WTC11 (cell line): ENCODE measurements at regions of chr5 and their contacts with region 1.

Region 1: DNA sequence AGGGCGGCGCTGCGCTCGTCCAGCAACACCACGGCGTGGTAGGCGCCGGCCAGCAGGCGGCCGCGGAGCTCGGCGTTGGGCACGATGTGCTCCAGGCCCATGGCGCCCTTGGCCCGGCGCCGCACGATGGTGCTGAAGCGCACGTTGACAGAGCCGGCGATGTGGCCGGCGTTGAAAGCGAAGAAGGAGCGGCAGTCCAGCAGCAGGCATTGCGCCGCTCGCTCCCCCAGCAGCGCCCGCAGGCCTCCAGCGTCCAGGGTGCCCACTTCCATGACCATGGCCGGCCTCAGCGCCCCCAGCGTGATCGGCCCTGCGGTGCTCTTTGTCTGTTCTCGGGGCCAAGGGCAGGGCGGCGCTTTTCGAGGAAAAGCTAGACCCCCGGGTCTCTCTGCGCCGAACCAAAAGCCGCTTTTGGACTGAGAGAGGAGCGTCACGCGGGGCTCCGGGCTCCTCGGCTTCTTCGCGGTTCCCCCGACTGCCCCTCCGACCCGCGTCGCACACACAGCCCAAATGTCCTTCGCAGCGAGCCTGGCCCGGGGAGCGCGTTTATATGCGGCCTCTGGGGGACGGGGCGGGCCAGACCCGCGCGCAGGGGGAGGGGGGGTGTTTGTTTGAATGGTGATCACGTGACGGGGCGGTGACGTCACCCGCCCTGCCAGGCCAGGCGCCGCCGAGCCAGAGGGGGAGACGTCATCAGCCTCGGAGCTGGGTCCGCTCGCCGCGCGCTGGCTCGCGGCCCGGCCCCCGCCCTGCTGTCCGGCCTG is at the start of gene DUSP1:
- DNase-seq: peak; percentile 97
- ATAC-seq: peak; percentile 78
- H3K4me3 Mint-ChIP-seq: peak within 1 kb of the TSS; percentile 88
- H3K27ac Mint-ChIP-seq: peak within 1 kb of the TSS; percentile 90
- H3K4me1 Mint-ChIP-seq: peaks cover 24% of the 10 kb centered on the region
- H3K27me3 Mint-ChIP-seq: peaks cover 39% of the 10 kb centered on the region
- CTCF ChIP-seq: no peak
- total RNA-seq, gene DUSP1: 9.5 to 12.4 TPM (median 11.0 TPM) in 3 replicates

Region 2: DNA sequence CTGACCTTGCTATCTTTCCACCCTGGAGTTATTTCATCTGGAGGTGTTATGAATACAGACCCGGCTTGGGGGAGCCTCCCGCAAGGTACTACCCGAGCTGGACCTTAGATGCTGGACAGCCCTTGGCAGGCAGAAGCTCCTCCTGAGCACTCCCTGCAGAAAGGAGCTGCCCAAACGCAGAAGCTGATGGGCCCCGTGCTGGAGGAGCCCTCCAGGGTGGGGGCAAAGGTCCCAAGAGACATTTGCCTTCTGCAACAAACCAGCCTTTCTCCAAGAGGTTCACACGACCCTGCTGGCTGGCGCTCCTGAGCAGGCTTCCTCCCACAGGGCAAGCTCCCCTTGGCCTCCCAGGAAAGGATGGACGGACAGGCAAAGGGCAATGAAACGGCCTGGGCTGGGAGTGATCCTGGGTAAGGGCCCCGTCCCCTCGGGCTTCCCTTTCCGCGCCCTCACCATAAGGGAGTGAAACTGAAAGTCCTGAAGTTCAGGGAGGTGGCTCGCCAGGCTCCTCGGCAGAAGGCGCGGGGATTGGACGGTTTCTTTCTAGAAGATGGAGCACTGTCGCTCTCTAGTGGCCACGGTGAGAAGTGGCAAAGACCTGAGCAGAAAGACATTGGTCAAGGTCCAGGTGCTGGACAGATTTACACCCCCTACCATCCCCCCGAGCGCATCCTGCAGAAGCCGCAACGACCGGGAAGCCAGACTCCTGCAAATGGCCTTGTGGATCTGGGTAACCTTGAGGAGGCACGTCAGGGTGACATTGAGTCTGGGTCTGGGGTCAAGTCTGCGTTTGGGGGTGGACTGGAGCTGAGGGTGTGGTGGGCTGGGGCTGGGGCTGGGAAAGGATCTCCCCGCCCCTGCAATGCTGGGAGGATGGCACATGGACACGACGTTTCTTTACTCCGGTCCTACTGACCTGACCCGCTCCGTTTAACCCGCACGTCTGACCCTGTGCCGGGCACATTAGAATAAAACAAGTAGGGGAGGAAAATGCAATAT is 73.4 kb before region 1 on chr5:
- CTCF ChIA-PET with region 1: interaction called, 10 read pairs
- POLR2A ChIA-PET with region 1: no interaction called
- DNase-seq: peak; percentile 89
- ATAC-seq: peak; percentile 60
- H3K4me3 Mint-ChIP-seq: peak overlapping the region; percentile 66
- H3K27ac Mint-ChIP-seq: no peak overlapping the region
- H3K4me1 Mint-ChIP-seq: peaks cover 47% of the 10 kb centered on the region
- H3K27me3 Mint-ChIP-seq: peaks cover 32% of the 10 kb centered on the region
- CTCF ChIP-seq: peak; percentile 85

Region 3: GRCh38 chr5:172714491-172715421 is 56.1 kb before region 1 on chr5:
- CTCF ChIA-PET with region 1: interaction called, 72 read pairs
- POLR2A ChIA-PET with region 1: interaction called, 11 read pairs
- DNase-seq: peak; percentile 85
- ATAC-seq: peak; percentile 80
- H3K4me3 Mint-ChIP-seq: no peak overlapping the region
- H3K27ac Mint-ChIP-seq: no peak overlapping the region
- H3K4me1 Mint-ChIP-seq: peaks cover 2% of the 10 kb centered on the region; the same call in 1 of the 2 replicates
- H3K27me3 Mint-ChIP-seq: peaks cover 13% of the 10 kb centered on the region
- CTCF ChIP-seq: peak; percentile 87

Region 4: GRCh38 chr5:172758083-172758833 is 12.6 kb before region 1 on chr5:
- CTCF ChIA-PET with region 1: interaction called, 21 read pairs
- POLR2A ChIA-PET with region 1: interaction called, 4 read pairs
- DNase-seq: no peak
- ATAC-seq: peak; percentile 84
- H3K4me3 Mint-ChIP-seq: no peak overlapping the region
- H3K27ac Mint-ChIP-seq: peak overlapping the region; percentile 25; the same call in 1 of the 2 replicates
- H3K4me1 Mint-ChIP-seq: peaks cover 9% of the 10 kb centered on the region
- H3K27me3 Mint-ChIP-seq: peaks cover 36% of the 10 kb centered on the region
- CTCF ChIP-seq: no peak

Region 5: GRCh38 chr5:172788771-172789686 is 18.2 kb after region 1 on chr5:
- CTCF ChIA-PET with region 1: interaction called, 34 read pairs
- POLR2A ChIA-PET with region 1: interaction called, 3 read pairs
- DNase-seq: no peak
- ATAC-seq: peak; percentile 41
- H3K4me3 Mint-ChIP-seq: no peak overlapping the region
- H3K27ac Mint-ChIP-seq: no peak overlapping the region
- H3K4me1 Mint-ChIP-seq: peaks cover 5% of the 10 kb centered on the region; the same call in 1 of the 2 replicates
- H3K27me3 Mint-ChIP-seq: peaks cover 5% of the 10 kb centered on the region; the same call in 1 of the 2 replicates
- CTCF ChIP-seq: no peak

Region 6: GRCh38 chr5:172833686-172834414 is 63.0 kb after region 1 on chr5 and contains the start of gene ERGIC1:
- CTCF ChIA-PET with region 1: interaction called, 20 read pairs
- POLR2A ChIA-PET with region 1: interaction called, 7 read pairs
- DNase-seq: peak; percentile 80
- ATAC-seq: peak; percentile 79
- H3K4me3 Mint-ChIP-seq: peak within 1 kb of the TSS; percentile 85
- H3K27ac Mint-ChIP-seq: peak within 1 kb of the TSS; percentile 97
- H3K4me1 Mint-ChIP-seq: peaks cover 35% of the 10 kb centered on the region
- H3K27me3 Mint-ChIP-seq: no peaks in the 10 kb centered on the region
- CTCF ChIP-seq: no peak
- total RNA-seq, gene ERGIC1: 89.8 to 101 TPM (median 97.1 TPM) in 3 replicates

Region 7: DNA sequence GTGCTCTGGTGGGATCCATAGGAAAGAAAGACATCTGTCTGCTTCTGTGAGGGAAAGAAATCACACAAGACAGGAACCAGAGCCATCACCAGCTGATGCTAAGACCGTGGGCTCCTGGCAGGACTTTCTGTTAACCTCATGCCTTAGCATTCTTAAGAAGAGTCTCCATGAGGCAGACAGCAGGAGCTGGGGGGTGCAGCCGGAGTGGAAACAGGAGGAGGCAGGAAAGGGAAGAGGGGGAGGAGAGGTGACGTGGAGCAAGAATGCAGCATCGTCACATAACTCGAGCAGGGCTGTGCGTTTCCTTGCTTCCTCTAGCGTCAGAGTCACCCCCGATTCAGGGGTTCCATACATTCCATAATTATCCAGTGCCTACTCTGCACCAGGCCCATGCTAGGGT is 116.8 kb after region 1 on chr5:
- CTCF ChIA-PET with region 1: no interaction called
- POLR2A ChIA-PET with region 1: no interaction called
- DNase-seq: no peak
- ATAC-seq: no peak
- H3K4me3 Mint-ChIP-seq: no peak overlapping the region
- H3K27ac Mint-ChIP-seq: no peak overlapping the region
- H3K4me1 Mint-ChIP-seq: peaks cover 6% of the 10 kb centered on the region; the same call in 1 of the 2 replicates
- H3K27me3 Mint-ChIP-seq: no peaks in the 10 kb centered on the region
- CTCF ChIP-seq: no peak

Region 8: DNA sequence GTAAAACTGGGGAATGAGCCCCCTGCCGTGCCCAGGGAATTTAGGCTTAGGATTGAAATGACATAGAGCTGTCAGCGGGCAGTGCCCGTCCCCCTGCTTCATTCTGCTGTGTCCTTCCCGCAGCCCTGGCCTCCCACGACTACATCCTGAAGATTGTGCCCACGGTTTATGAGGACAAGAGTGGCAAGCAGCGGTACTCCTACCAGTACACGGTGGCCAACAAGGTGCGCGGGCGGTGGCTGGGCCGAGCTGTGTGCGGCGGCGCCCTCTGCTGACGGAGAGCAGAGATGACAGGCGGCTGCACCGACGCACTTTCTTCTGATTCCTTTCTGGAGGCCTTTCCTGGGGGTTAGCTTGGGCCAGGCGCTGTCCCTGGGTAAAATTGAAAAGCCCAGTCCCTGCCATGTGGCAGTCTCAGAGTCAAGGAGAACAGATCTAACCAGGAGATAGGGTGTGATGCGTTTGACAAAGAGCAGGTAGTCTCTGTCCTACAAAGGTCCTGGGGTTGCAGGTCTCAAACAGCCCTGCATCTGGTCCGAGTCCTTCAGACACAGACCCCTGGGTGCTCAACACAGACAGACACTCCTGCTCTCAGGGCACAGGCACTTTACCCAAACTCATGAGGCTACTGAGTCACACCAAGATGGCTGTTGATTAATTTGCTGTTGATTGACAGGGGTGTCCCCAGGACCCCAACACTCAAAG is 161.6 kb after region 1 on chr5:
- CTCF ChIA-PET with region 1: interaction called, 15 read pairs
- POLR2A ChIA-PET with region 1: no interaction called
- DNase-seq: peak; percentile 66
- ATAC-seq: peak; percentile 92
- H3K4me3 Mint-ChIP-seq: no peak overlapping the region
- H3K27ac Mint-ChIP-seq: no peak overlapping the region
- H3K4me1 Mint-ChIP-seq: no peaks in the 10 kb centered on the region
- H3K27me3 Mint-ChIP-seq: no peaks in the 10 kb centered on the region
- CTCF ChIP-seq: peak; percentile 90

Region 9: DNA sequence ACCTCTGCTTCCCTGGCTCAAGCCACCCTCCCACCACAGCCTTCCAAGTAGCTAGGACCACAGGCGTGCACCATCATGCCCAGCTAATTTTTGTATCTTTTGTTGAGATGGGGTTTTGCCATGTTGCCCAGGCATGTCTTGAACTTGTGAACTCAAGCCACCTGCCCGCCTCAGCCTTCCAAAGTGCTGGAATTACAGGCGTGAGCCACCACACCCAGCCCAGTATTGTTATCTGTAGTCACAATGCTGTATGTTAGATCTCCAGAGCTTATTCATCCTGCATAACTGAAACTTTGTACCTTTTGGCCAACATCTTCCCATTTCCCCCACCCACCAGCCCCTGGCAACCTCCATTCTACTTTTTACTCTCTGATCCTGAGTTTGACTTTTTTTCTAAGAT is 322.7 kb after region 1 on chr5:
- CTCF ChIA-PET with region 1: no interaction called
- POLR2A ChIA-PET with region 1: no interaction called
- DNase-seq: no peak
- ATAC-seq: no peak
- H3K4me3 Mint-ChIP-seq: no peak overlapping the region
- H3K27ac Mint-ChIP-seq: no peak overlapping the region
- H3K4me1 Mint-ChIP-seq: no peaks in the 10 kb centered on the region
- H3K27me3 Mint-ChIP-seq: no peaks in the 10 kb centered on the region
- CTCF ChIP-seq: no peak